ENCODE measurements at regions of chr21 and their contacts with region 1.

Region 1: GRCh38 chr21:33542640-33543504 is at the start of gene SON:
- DNase-seq: peak; percentile 98
- H3K4me3 Mint-ChIP-seq: peak within 1 kb of the TSS; percentile 95
- H3K27ac Mint-ChIP-seq: peak within 1 kb of the TSS; percentile 100
- H3K4me1 Mint-ChIP-seq: peaks cover 31% of the 10 kb centered on the region
- H3K27me3 Mint-ChIP-seq: no peaks in the 10 kb centered on the region
- total RNA-seq, gene SON: 345 and 376 TPM in 2 replicates

Region 2: DNA sequence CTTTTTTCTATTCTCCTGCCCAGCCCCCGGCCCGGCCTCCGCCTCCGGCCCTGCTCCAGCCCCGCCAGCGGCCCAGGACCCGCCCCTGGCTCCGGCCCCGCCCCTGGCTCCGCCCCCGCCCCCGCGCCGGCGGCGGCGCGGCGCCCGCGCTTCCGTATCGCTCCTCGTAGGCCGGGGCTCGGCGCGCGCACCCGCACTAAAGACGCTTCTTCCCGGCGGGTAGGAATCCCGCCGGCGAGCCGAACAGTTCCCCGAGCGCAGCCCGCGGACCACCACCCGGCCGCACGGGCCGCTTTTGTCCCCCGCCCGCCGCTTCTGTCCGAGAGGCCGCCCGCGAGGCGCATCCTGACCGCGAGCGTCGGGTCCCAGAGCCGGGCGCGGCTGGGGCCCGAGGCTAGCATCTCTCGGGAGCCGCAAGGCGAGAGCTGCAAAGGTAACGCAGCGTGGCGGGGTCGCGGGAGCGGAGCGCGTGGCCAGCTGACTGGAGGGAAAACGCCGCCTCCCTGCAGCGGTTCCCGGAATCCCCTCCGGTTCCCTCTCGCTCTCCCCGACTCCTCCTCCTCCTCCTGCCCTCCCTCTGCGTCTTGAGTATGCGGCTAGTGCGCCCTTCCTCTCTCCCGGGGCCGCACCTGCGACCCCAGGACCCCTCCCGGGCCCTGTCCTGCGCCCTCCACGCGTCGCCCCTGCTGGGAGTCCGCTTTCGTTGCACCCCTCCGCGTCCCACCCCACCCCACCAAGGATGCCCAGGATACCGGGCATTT is 312.9 kb before region 1 on chr21 and contains the start of gene IFNAR2:
- intact Hi-C with region 1: loop called (anchors 5 kb)
- DNase-seq: peak; percentile 71
- H3K4me3 Mint-ChIP-seq: peak within 1 kb of the TSS; percentile 86
- H3K27ac Mint-ChIP-seq: peak within 1 kb of the TSS; percentile 74
- H3K4me1 Mint-ChIP-seq: peaks cover 44% of the 10 kb centered on the region
- H3K27me3 Mint-ChIP-seq: no peaks in the 10 kb centered on the region
- total RNA-seq, gene IFNAR2: 34.8 and 36.8 TPM in 2 replicates

Region 3: DNA sequence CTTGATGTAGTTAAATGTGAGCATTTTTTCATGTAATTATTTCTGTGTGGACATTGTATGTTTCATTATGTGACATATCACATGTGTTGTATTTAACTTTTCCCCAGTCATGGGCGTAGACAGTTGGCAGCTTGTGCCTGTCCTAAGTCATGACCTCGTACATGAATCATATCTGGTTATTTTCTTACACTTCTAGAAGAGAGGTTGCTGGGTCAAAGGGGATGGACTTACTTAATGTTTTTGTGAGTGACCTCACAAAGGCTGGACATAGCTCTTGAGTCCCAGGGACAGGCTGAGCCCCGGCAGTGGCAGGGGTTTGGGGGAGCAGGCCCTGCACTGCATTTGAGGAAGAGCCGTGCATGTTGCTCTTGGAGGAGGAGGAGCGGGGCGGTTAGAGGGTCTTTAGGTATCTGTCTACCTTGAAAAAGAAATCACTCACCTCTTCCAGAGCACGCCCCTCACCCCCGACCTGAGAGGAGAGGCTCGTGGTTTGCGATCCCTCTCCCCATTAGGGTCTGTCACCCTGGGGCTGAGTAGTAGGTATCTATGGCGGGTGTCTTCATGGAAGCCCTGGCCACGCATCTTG is 123.2 kb before region 1 on chr21:
- intact Hi-C with region 1: no loop called
- DNase-seq: no peak
- H3K4me3 Mint-ChIP-seq: no peak overlapping the region
- H3K27ac Mint-ChIP-seq: no peak overlapping the region
- H3K4me1 Mint-ChIP-seq: peaks cover 9% of the 10 kb centered on the region
- H3K27me3 Mint-ChIP-seq: no peaks in the 10 kb centered on the region

Region 4: DNA sequence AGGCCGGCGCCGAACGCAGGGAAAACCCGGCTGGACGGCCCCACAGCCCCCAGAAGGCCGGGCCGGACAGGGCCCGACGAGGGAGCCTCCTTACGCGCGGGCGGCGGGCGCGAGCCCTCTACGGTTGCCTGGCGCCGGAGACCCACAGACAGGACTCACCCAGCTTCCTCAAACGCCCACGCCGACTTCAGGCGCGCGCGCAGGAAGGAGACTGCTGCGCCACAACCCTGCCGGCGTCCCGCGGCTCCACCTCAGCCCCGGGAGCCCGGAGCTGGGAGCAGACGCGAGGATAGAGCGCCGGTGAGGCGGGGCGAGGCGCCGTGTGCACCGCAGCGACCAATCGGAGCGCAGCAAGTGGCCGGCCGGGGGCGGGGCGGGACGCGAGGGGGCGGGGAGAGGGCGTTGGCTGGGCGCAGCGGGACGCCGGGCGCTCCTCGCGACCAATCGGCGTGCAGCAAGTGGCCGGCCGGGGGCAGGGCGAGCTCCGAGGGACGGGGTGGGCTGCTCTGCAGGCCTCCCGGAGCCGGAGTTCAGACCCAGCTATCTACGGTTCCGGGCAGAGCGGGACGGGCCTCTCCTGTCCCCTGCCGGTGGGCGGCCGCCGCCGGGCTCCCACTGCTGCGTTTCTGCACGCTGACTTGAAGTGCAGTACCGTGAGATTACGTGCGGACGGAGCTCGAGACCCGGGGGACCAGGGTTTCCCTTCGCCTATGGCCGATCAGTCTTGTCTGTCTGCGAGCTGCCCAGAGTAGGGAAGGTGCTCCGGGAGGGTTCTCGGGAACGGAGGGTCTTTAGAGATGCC is 63.0 kb before region 1 on chr21 and contains the start of gene TMEM50B:
- intact Hi-C with region 1: loop called (anchors 1 kb)
- DNase-seq: peak; percentile 93
- H3K4me3 Mint-ChIP-seq: peak within 1 kb of the TSS; percentile 94
- H3K27ac Mint-ChIP-seq: peak within 1 kb of the TSS; percentile 88
- H3K4me1 Mint-ChIP-seq: peaks cover 8% of the 10 kb centered on the region
- H3K27me3 Mint-ChIP-seq: no peaks in the 10 kb centered on the region
- total RNA-seq, gene TMEM50B: 16.5 and 18.7 TPM in 2 replicates

Region 5: DNA sequence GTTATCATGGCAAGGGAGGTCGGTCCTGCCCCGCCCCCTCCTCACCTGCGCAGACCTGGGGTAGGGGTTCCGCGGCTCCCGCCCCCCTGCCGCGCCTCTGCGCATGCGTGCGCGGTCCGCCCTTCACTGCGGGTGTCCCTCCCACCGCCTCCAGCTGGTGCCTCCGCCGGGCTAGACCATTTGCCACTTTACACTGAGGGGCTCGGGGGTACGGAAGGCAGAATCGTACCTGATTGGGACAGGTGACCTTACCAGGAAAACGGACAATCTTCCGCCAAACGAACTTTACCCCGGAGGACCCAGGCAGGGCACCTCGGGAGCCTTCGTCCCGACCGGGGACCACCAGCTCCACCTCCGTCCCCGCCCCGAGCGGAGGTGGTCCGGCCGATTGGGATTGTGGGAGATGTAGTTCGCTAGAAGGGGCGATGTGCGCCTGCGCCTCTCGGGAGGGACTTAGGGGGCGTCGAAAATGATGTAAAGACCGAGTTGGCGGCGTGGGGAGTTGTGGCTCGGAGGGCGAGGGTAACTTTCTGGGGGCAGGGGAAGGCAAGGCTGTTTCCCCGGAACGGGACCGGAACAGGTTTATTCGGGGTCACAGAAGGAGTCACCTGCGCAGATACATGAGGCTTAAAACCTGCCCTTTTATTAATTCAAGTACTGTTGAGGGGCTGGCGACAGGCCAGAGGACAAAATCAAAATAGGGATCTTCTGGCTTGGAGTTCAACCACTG is 51.3 kb before region 1 on chr21 and contains the start of gene DNAJC28:
- intact Hi-C with region 1: loop called (anchors 2 kb)
- DNase-seq: peak; percentile 90
- H3K4me3 Mint-ChIP-seq: peak within 1 kb of the TSS; percentile 98
- H3K27ac Mint-ChIP-seq: peak within 1 kb of the TSS; percentile 94
- H3K4me1 Mint-ChIP-seq: peaks cover 9% of the 10 kb centered on the region
- H3K27me3 Mint-ChIP-seq: peaks cover 12% of the 10 kb centered on the region
- total RNA-seq, gene DNAJC28: 0.16 and 0.37 TPM in 2 replicates

Region 6: DNA sequence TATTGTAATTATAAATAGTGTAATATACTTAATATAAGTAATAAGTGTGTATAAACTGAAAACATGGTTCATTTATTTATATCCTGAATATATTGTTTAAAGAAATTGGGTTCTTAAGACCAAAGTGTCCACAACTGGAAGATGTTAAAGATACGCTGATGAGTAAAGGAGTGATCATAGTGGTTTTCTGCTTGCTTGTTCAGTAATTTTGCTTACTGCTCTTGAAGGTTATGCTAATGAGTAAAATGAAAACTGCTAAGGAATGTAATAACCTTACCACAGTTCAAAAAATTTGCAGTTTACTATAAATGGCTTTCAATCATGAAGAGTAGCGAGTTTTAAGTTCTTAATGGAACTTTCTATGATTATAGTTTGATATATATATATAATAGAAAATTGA is 23.6 kb after region 1 on chr21:
- intact Hi-C with region 1: loop called (anchors 2 kb)
- DNase-seq: no peak
- H3K4me3 Mint-ChIP-seq: no peak overlapping the region
- H3K27ac Mint-ChIP-seq: no peak overlapping the region
- H3K4me1 Mint-ChIP-seq: peaks cover 26% of the 10 kb centered on the region
- H3K27me3 Mint-ChIP-seq: no peaks in the 10 kb centered on the region

Region 7: DNA sequence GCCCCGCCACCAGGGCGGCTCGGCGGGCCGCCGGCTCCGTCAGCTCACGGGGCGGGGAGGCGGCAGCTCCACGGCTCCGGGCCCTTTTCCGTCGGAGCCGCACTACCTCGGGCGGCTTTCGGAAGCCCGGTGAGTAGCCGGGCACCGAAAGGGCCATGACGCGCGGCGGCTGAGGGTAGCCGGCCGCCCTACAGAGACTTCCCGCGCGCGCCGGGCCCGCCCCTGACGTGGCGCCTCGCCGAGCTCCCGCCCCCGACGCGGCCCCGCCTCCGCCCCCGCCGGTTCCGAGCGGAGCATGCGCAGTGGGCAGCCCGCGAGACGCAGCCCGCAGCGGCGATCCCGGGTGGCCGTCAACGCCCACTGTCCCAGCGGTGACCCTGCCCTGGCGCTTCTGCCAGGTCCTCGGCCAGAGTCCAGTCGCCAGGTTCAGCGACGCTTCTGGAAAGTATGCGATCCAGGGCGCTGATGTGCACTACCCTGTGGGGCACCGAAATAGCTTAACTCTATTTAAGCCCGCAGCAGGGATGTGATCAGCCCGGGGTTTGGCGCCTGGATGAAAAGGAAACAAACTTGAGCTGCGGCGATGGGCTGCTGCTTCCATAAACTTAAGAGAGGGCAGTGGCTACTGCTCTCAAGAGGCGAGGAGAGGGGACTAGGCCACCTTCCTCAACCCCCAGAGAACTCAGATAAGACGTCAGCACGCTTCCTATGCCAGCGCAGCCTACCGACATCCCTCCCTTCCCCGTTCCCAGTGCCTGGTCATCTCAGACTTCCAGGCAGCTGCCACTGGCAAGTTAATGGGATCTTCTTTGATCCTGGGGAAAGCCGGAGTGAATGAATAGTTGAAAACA is 45.8 kb after region 1 on chr21 and contains the start of gene DONSON:
- intact Hi-C with region 1: loop called (anchors 1 kb)
- DNase-seq: peak; percentile 88
- H3K4me3 Mint-ChIP-seq: peak within 1 kb of the TSS; percentile 93
- H3K27ac Mint-ChIP-seq: peak within 1 kb of the TSS; percentile 80
- H3K4me1 Mint-ChIP-seq: peaks cover 23% of the 10 kb centered on the region
- H3K27me3 Mint-ChIP-seq: no peaks in the 10 kb centered on the region
- total RNA-seq, gene DONSON: 40.3 and 41.7 TPM in 2 replicates

Region 8: DNA sequence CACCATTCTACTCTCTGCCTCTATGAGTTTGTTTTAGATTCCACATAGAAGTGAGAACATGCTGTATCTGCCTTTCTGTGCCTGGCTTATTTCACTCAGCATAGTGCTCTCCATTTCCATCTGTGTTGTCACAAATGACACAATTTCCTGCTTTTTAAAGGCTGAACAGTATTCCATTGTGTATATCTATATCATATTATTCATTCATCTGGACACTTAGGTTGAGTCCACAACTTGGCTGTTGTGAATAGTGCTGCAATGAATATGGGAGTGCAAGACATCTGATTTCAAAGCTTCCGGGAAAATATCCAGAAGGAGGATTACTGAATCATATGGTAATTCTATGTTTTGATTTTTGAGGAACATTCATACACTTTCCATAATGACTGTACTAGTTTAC is 65.7 kb after region 1 on chr21:
- intact Hi-C with region 1: no loop called
- DNase-seq: no peak
- H3K4me3 Mint-ChIP-seq: no peak overlapping the region
- H3K27ac Mint-ChIP-seq: no peak overlapping the region
- H3K4me1 Mint-ChIP-seq: no peaks in the 10 kb centered on the region
- H3K27me3 Mint-ChIP-seq: no peaks in the 10 kb centered on the region

Region 9: DNA sequence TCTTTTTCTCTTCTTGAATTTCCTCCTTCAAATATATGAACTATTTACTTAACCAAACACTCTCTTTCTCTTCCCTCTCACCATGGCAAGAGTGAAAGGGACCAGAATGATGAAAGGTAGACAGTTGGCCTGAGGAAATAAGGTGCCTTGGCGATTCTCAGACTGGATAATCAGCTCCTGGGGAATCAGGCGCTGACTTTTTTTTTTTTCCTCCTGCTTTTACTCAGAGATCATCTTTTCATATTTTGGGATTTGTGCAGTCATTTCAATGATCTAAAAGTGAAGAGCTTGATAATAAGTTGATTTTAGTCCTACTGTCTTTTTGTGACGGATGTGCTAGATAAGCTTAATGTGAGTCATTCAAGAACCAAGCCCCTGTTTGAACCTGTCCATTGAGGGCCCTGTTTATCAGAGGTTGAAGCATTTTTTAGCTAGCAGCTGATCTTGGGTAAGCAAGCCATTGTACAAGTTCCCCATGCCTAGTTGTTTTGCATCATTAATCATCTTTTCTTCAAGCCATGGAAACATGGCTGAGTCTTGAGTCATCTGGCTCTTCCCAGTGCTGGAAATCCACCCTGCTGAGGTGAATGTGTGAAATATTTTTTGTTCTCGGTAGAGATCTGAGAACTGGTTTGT is 140.2 kb after region 1 on chr21:
- intact Hi-C with region 1: no loop called
- DNase-seq: no peak
- H3K4me3 Mint-ChIP-seq: no peak overlapping the region
- H3K27ac Mint-ChIP-seq: no peak overlapping the region
- H3K4me1 Mint-ChIP-seq: no peaks in the 10 kb centered on the region
- H3K27me3 Mint-ChIP-seq: peaks cover 9% of the 10 kb centered on the region